ENCODE measurements at regions of chr9 and their contacts with region 1.

Region 1: GRCh38 chr9:33167046-33167808 is at the start of gene B4GALT1:
- DNase-seq: peak; percentile 91
- H3K4me3 Mint-ChIP-seq: peak within 1 kb of the TSS; percentile 96
- H3K27ac Mint-ChIP-seq: peak within 1 kb of the TSS; percentile 98
- H3K4me1 Mint-ChIP-seq: peaks cover 71% of the 10 kb centered on the region
- H3K27me3 Mint-ChIP-seq: no peaks in the 10 kb centered on the region
- total RNA-seq, gene B4GALT1: 64.4 and 66.5 TPM in 2 replicates

Region 2: DNA sequence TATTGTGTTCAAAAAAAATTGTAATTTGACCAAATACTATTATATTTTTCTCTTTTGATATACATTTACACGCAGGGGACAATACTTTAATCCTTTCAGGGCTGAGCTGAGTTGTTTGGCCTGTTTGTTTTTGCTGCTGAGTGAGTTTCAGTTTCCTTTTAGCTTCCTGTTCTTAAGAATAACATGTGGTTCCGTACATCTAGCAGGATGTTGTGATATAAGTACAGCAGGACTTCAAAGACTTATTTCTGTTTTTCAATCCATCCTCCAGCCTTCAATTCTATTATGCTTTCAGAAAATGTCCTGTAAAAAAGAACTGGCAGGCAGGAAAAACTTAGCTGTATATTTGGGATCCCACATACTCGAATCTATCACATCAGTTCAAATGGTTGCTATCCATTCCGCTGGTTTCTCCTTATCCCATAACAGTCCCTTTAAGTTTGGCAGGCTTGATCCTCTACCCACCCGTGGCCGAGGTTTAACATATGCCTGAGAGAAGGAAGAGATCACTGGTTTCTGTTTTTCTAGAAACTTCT is 1820.1 kb before region 1 on chr9:
- intact Hi-C with region 1: loop called (anchors 5 kb)
- DNase-seq: peak; percentile 27
- H3K4me3 Mint-ChIP-seq: peak overlapping the region; percentile 63
- H3K27ac Mint-ChIP-seq: peak overlapping the region; percentile 88
- H3K4me1 Mint-ChIP-seq: peaks cover 37% of the 10 kb centered on the region
- H3K27me3 Mint-ChIP-seq: no peaks in the 10 kb centered on the region

Region 3: DNA sequence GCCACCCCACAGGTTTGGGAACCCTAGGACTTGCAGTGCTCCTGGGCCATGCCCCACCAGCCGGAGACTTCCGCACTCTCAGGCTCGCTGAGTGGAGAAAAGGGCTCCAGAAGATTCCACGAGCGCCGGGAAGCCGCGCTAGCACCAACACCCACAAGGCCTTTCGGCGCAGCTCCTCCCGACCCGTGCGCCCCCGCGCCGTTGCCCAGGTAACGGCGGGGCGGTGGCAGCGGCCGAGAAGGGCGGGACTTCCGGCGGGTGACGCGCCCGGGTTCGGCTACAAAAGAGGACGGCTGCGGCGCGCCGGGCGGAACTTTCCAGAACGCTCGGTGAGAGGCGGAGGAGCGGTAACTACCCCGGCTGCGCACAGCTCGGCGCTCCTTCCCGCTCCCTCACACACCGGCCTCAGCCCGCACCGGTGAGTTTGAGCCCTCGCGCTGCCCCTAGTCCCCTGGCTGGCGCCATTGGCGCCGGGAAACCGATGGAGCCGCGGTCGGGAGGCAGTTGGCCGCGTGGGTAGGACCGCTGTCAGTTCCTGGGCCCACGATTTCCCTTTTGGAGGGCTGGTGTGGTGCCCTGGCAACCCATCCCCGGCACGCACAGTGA is 142.2 kb before region 1 on chr9 and contains the start of gene DNAJA1:
- intact Hi-C with region 1: loop called (anchors 1 kb)
- DNase-seq: peak; percentile 95
- H3K4me3 Mint-ChIP-seq: peak within 1 kb of the TSS; percentile 94
- H3K27ac Mint-ChIP-seq: peak within 1 kb of the TSS; percentile 98
- H3K4me1 Mint-ChIP-seq: peaks cover 68% of the 10 kb centered on the region
- H3K27me3 Mint-ChIP-seq: no peaks in the 10 kb centered on the region
- total RNA-seq, gene DNAJA1: 296 and 312 TPM in 2 replicates

Region 4: GRCh38 chr9:33130508-33130911 is 36.7 kb before region 1 on chr9:
- intact Hi-C with region 1: loop called (anchors 1 kb)
- DNase-seq: no peak
- H3K4me3 Mint-ChIP-seq: peak overlapping the region; percentile 51
- H3K27ac Mint-ChIP-seq: peak overlapping the region; percentile 93
- H3K4me1 Mint-ChIP-seq: peaks cover 37% of the 10 kb centered on the region
- H3K27me3 Mint-ChIP-seq: no peaks in the 10 kb centered on the region

Region 5: GRCh38 chr9:33225319-33226149 is 58.3 kb after region 1 on chr9:
- intact Hi-C with region 1: loop called (anchors 1 kb)
- DNase-seq: peak; percentile 55
- H3K4me3 Mint-ChIP-seq: no peak overlapping the region
- H3K27ac Mint-ChIP-seq: peak overlapping the region; percentile 70
- H3K4me1 Mint-ChIP-seq: peaks cover 36% of the 10 kb centered on the region
- H3K27me3 Mint-ChIP-seq: no peaks in the 10 kb centered on the region

Region 6: DNA sequence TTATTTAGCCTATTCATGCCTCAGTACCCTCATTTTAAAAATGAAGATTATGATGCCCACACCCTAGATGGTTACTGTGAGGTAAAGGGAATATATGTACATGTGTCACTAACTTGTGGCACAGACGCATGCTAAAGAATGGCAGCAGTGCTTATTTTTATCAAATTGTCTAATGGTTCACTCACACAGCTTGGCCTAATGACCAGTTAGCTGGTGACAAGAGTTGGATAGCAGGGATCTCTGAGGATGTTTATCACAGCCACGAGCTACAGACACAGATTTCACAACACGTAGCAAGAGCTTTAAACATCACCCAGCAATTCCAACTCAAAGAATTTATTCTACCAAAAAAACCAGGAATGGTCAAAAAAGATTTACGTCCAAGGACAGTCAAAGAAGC is 90.0 kb after region 1 on chr9:
- intact Hi-C with region 1: no loop called
- DNase-seq: no peak
- H3K4me3 Mint-ChIP-seq: no peak overlapping the region
- H3K27ac Mint-ChIP-seq: no peak overlapping the region
- H3K4me1 Mint-ChIP-seq: peaks cover 17% of the 10 kb centered on the region
- H3K27me3 Mint-ChIP-seq: no peaks in the 10 kb centered on the region

Region 7: DNA sequence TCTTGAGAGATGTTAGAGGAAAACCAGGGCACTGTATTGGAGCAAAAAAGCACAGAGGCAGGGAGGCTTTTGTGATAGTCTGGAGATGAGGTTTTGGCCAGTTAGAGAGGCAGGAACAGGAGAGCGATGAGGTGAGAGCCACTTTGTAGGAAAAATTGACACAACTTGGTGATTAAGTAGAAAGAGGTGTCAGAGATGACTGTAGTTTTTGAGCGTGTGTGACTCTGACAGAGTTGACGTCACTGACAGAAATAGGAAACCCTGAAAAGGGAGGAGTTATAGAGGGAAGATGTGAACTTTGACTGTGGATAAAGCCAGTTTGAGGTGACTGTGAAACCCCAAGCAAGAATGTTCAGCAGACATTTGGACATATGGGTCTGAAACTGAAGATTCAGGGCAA is 138.8 kb after region 1 on chr9:
- intact Hi-C with region 1: loop called (anchors 5 kb)
- DNase-seq: peak; percentile 42
- H3K4me3 Mint-ChIP-seq: no peak overlapping the region
- H3K27ac Mint-ChIP-seq: no peak overlapping the region
- H3K4me1 Mint-ChIP-seq: peaks cover 9% of the 10 kb centered on the region
- H3K27me3 Mint-ChIP-seq: no peaks in the 10 kb centered on the region

Region 8: DNA sequence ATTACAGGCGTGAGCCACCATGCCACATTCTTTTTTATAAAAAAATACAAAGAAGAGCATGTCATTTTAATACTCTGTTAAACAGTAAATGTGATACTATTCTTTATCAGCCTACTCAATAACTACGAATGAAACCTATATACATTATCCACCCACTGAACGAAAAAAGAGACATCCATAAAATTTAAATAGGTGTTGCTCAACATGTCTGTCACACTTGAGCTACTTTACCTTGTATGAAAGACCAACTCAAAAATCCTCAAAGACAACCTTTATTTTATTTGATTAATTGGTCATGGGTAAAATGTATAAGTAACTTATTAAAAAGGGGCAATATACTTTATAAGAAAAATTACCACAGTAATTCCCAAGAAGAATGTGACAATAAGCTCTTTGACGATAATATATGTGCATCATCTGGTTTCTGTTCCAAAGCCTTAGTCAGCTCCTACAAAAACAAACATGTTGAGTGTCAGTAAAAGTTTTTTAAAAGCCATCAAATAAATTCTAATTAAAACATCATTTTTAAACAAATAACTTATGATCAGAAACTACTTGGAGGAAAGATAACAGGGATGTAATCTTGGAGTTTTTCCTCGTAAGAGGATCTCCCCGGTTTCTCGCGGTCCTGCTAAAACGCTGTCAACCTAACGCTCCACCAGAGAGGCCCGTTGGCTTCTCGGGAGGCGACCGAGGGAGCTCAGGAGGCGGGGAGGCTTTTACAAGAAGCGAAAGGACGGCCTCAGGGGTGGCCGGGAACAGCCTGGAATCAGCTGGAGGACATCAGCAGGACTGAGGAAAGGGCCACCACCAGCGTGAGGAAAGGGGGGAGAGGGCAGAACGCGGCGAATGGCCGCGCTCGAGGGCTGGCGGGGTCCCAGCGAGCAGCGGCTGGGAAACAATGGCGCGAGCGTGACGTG is 343.3 kb after region 1 on chr9:
- intact Hi-C with region 1: no loop called
- DNase-seq: no peak
- H3K4me3 Mint-ChIP-seq: peak overlapping the region; percentile 94
- H3K27ac Mint-ChIP-seq: peak overlapping the region; percentile 94
- H3K4me1 Mint-ChIP-seq: peaks cover 10% of the 10 kb centered on the region
- H3K27me3 Mint-ChIP-seq: peaks cover 9% of the 10 kb centered on the region

Region 9: GRCh38 chr9:34048923-34049697 is 881.9 kb after region 1 on chr9:
- intact Hi-C with region 1: loop called (anchors 2 kb)
- DNase-seq: peak; percentile 94
- H3K4me3 Mint-ChIP-seq: peak overlapping the region; percentile 98
- H3K27ac Mint-ChIP-seq: peak overlapping the region; percentile 100
- H3K4me1 Mint-ChIP-seq: peaks cover 44% of the 10 kb centered on the region
- H3K27me3 Mint-ChIP-seq: no peaks in the 10 kb centered on the region

Measured in activated T-helper 1 cell treated with anti-CD3 and anti-CD28 coated beads, Interleukin-12 subunit alpha, Interleukin-12 subunit beta, Interleukin-2, Interleukin-4 antibody, amounts not matched to agents 30 ng/mL and 10 ng/mL and 1 ng/mL, durations not matched to agents 14 hours and 24 hours and 36 hours (primary cell).